K562 (cell line): ENCODE measurements at regions of chr14 and their contacts with region 1.

Region 1: DNA sequence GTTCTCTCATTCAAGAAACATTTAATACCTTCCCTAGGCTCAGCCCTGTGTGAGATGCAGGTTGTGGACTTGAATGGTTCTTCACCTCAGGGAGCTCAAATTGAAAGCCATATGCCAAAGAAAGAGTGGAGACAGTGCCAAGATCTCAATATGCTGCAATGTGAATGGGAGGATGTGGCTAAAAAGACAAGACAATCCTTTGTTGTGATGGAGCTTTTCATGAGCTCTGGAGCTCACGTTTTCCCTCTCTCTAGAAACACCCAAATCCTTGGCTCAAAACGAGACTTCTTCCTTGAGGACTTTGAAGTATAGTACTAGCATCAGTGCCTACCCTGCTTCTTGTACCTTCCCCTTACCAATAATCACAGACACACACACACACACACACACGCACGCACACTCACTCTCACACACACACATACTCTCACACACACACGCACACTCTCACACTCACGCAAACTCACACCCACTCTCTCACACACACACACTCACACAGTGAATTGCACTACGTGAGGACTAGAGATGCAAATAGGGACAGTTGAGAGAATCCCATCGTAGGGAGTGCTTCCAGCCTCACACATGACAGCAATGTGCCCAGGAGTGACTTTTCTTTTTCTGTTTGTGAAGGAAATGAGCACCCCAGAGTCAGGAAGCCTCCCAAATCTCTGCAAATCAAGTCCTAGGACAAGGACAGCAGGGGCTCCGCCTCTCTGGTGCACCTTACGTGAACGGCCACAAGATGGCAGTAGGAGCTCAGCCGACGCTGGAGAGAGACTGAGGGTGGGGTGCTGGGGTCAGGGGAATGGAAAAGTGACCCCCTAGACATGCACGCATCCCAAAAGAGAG is 231.4 kb downstream of the PCNX1 start:
- DNase-seq: peak; percentile 60 to 71 (median 66)
- ATAC-seq: peak; percentile 93
- H3K4me3 ChIP-seq: no peak overlapping the region
- H3K27ac ChIP-seq: no peak overlapping the region
- H3K4me1 ChIP-seq: peaks cover 0 to 8% of the 10 kb centered on the region in 2 experiments; a peak in 4 of 5 replicates
- H3K27me3 ChIP-seq: no peaks in the 10 kb centered on the region
- CTCF ChIP-seq: peak; percentile 70 to 80 (median 71)
- EP300 ChIP-seq: no peak
- POLR2A ChIP-seq: no peak
- RAD21 ChIP-seq: peak; percentile 71 to 87

Region 2: DNA sequence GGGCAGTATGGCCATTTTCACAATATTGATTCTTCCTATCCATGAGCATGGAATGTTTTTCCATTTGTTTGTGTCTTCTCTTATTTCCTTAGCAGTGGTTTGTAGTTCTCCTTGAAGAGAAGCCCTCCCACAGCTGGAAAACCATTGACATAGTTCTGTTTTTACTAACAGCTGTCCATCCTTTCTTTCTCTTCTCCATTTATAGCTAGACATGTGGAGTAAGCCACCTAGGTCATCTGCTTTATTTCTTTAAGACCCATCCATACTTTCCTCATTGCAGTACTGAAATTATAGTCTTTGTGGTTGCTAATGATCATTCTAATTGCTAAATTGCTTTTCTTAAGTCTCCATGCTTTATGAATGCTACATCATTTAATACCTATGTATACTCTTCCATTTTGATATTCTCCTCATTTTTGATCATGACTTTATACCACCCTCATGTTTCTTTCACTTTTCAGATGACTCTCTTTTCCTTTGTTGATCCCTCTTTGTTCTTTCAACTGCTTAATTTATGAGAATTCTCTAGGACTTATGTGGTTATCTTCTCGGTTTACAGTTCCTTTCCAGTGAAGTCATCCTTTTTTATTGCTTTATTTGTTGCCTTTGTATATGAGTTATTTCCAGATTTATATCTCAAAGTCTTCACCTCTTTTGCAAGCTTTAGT is 117.2 kb before region 1 on chr14:
- CTCF ChIA-PET with region 1: no interaction called
- POLR2A ChIA-PET with region 1: no interaction called
- in situ Hi-C with region 1: no loop called
- intact Hi-C with region 1: no loop called
- DNase-seq: no peak
- ATAC-seq: no peak
- H3K4me3 ChIP-seq: no peak overlapping the region
- H3K27ac ChIP-seq: no peak overlapping the region
- H3K4me1 ChIP-seq: no peaks in the 10 kb centered on the region
- H3K27me3 ChIP-seq: no peaks in the 10 kb centered on the region
- CTCF ChIP-seq: no peak
- EP300 ChIP-seq: no peak
- POLR2A ChIP-seq: no peak
- RAD21 ChIP-seq: no peak

Region 3: GRCh38 chr14:71060825-71061455 is 77.7 kb before region 1 on chr14:
- CTCF ChIA-PET with region 1: no interaction called
- POLR2A ChIA-PET with region 1: no interaction called
- in situ Hi-C with region 1: no loop called
- intact Hi-C with region 1: no loop called
- DNase-seq: no peak
- ATAC-seq: no peak
- H3K4me3 ChIP-seq: no peak overlapping the region
- H3K27ac ChIP-seq: no peak overlapping the region
- H3K4me1 ChIP-seq: no peaks in the 10 kb centered on the region
- H3K27me3 ChIP-seq: no peaks in the 10 kb centered on the region
- CTCF ChIP-seq: no peak
- EP300 ChIP-seq: no peak
- POLR2A ChIP-seq: no peak
- RAD21 ChIP-seq: no peak

Region 4: GRCh38 chr14:71123579-71124135 is 15.0 kb before region 1 on chr14:
- CTCF ChIA-PET with region 1: no interaction called
- POLR2A ChIA-PET with region 1: no interaction called
- in situ Hi-C with region 1: no loop called
- intact Hi-C with region 1: no loop called
- DNase-seq: no peak
- ATAC-seq: no peak
- H3K4me3 ChIP-seq: no peak overlapping the region
- H3K27ac ChIP-seq: no peak overlapping the region
- H3K4me1 ChIP-seq: no peaks in the 10 kb centered on the region; a peak in 1 of 5 replicates
- H3K27me3 ChIP-seq: no peaks in the 10 kb centered on the region
- CTCF ChIP-seq: no peak
- EP300 ChIP-seq: no peak
- POLR2A ChIP-seq: no peak
- RAD21 ChIP-seq: no peak

Region 5: GRCh38 chr14:71388862-71389261 is 250.2 kb after region 1 on chr14:
- CTCF ChIA-PET with region 1: no interaction called
- POLR2A ChIA-PET with region 1: no interaction called
- in situ Hi-C with region 1: no loop called
- intact Hi-C with region 1: no loop called
- DNase-seq: no peak
- ATAC-seq: no peak
- H3K4me3 ChIP-seq: no peak overlapping the region
- H3K27ac ChIP-seq: no peak overlapping the region
- H3K4me1 ChIP-seq: peaks cover 2 to 10% of the 10 kb centered on the region in 2 experiments; a peak in 3 of 5 replicates
- H3K27me3 ChIP-seq: no peaks in the 10 kb centered on the region
- CTCF ChIP-seq: no peak
- EP300 ChIP-seq: no peak
- POLR2A ChIP-seq: no peak
- RAD21 ChIP-seq: no peak

Region 6: DNA sequence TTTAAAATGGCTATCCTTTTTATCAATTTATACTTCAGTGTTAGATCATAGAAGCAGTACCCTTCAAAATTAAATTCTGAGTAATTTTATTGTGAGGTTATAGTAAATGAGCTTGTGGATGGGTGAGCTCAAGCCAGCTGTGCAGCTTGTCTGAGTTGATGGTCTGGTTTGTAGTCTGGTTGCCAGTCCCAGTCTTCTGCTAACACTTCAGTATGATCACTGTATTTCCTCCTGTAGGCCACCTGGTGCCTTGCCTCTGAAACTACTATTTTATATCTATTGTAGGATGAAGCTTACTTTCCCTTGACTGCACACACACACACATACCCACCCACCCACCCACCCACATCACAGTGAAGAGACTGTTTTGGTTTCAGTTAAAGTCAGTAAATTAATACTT is 265.0 kb after region 1 on chr14:
- CTCF ChIA-PET with region 1: no interaction called
- POLR2A ChIA-PET with region 1: no interaction called
- in situ Hi-C with region 1: no loop called
- intact Hi-C with region 1: loop called (anchors 5 kb)
- DNase-seq: peak in 1 of 4 experiments; percentile 19
- ATAC-seq: peak; percentile 62; the same call in 2 of the 3 replicates
- H3K4me3 ChIP-seq: no peak overlapping the region
- H3K27ac ChIP-seq: no peak overlapping the region
- H3K4me1 ChIP-seq: no peaks in the 10 kb centered on the region
- H3K27me3 ChIP-seq: no peaks in the 10 kb centered on the region
- CTCF ChIP-seq: peak in 1 of 3 experiments; percentile 20; a peak in 2 of 6 replicates
- EP300 ChIP-seq: no peak
- POLR2A ChIP-seq: no peak
- RAD21 ChIP-seq: peak in 1 of 2 experiments; percentile 20; a peak in 1 of 4 replicates